ENCODE measurements at regions of chr17 and their contacts with region 1.

Region 1: GRCh38 chr17:64020056-64020766 is at the start of gene ICAM2:
- DNase-seq: peak; percentile 83 to 99 (median 90)
- ATAC-seq: peak; percentile 73
- H3K4me3 ChIP-seq: peak within 1 kb of the TSS; percentile 78 to 87
- H3K4me3 Mint-ChIP-seq: peak within 1 kb of the TSS; percentile 99
- H3K27ac ChIP-seq: peak within 1 kb of the TSS; percentile 95 to 99
- H3K27ac Mint-ChIP-seq: peak within 1 kb of the TSS; percentile 100
- H3K4me1 ChIP-seq: peaks cover 72% of the 10 kb centered on the region
- H3K4me1 Mint-ChIP-seq: peaks cover 79% of the 10 kb centered on the region
- H3K27me3 ChIP-seq: no peaks in the 10 kb centered on the region
- H3K27me3 Mint-ChIP-seq: no peaks in the 10 kb centered on the region
- CTCF ChIP-seq: no peak
- total RNA-seq, gene ICAM2: 38.0 to 38.7 TPM

Region 2: GRCh38 chr17:63171428-63172393 is 848.5 kb before region 1 on chr17:
- CTCF ChIA-PET with region 1: no interaction called
- POLR2A ChIA-PET with region 1: no interaction called
- intact Hi-C with region 1: no loop called
- DNase-seq: no peak
- ATAC-seq: no peak
- H3K4me3 ChIP-seq: no peak overlapping the region
- H3K4me3 Mint-ChIP-seq: no peak overlapping the region
- H3K27ac ChIP-seq: no peak overlapping the region
- H3K27ac Mint-ChIP-seq: no peak overlapping the region
- H3K4me1 ChIP-seq: no peaks in the 10 kb centered on the region
- H3K4me1 Mint-ChIP-seq: no peaks in the 10 kb centered on the region
- H3K27me3 ChIP-seq: no peaks in the 10 kb centered on the region
- H3K27me3 Mint-ChIP-seq: no peaks in the 10 kb centered on the region
- CTCF ChIP-seq: no peak

Region 3: DNA sequence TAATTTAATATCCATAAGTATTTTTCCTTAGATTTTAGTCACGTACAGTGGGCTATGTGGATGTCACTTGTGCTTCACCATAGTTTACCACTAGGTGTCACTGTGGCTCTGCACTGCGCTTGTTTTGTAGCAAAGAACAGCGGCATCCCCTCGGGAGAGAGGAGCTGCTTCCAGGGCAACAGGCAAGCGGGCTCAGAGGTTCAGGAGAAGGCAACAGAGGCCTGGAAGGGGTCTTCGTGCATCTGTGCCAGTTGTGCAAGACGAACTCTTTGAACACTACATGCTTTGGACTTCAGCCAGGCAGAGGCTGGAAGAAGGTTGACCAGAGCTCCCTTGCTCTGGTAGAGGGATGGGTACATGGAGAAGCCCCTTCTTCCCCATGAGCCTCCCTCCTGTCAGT is 594.7 kb before region 1 on chr17:
- CTCF ChIA-PET with region 1: no interaction called
- POLR2A ChIA-PET with region 1: no interaction called
- intact Hi-C with region 1: no loop called
- DNase-seq: peak; percentile 35 to 84 (median 73)
- ATAC-seq: peak; percentile 84
- H3K4me3 ChIP-seq: no peak overlapping the region
- H3K4me3 Mint-ChIP-seq: no peak overlapping the region
- H3K27ac ChIP-seq: no peak overlapping the region
- H3K27ac Mint-ChIP-seq: no peak overlapping the region
- H3K4me1 ChIP-seq: peaks cover 29% of the 10 kb centered on the region
- H3K4me1 Mint-ChIP-seq: peaks cover 43% of the 10 kb centered on the region
- H3K27me3 ChIP-seq: no peaks in the 10 kb centered on the region
- H3K27me3 Mint-ChIP-seq: no peaks in the 10 kb centered on the region
- CTCF ChIP-seq: peak; percentile 99

Region 4: DNA sequence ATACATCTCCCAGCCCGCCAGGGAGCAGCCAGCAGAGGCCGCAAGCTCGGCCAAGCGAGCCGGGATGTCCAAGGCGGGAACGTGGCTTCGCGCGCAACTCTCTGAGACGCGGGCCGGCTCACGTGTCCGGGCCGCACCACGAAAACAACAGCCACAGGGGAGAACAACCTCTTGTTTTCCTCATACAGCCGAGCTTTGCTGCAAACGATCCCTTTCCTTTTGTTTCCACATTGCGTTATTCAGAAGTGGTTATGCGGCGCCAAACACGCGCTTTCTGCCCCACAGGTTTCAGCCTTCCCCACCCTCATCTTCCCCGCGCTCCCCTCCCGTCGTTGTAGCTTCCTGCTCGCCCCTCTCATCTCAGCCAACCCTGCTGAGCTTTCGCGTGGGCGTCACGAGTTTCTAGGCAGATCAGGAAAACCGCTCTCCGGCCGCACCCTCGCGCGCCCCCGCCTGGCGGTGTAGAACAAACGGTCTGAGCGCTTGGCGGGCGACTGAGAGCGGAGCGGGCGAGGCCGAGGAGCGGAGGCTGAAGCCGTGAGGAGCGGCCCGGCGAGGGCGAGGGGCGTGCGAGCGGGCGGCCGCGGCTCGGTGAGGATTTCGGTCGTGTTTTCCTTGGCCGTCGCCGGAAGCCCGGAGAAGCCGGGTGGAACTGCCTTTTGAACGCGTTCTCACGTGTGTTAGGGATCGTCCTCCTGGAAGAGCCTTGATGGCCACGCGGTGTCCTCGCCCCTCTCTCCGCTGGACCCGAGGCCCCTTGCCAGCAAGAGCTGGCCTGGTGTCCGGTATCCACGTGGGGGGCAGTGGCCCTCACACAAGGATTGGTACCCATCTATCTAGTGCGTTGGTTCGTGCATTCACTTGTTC is 171.1 kb before region 1 on chr17:
- CTCF ChIA-PET with region 1: no interaction called
- POLR2A ChIA-PET with region 1: no interaction called
- intact Hi-C with region 1: loop called (anchors 5 to 10 kb)
- DNase-seq: peak; percentile 88 to 97 (median 95)
- ATAC-seq: peak; percentile 98
- H3K4me3 ChIP-seq: peak overlapping the region; percentile 34 to 55
- H3K4me3 Mint-ChIP-seq: peak overlapping the region; percentile 81
- H3K27ac ChIP-seq: peak overlapping the region; percentile 23 to 81
- H3K27ac Mint-ChIP-seq: peak overlapping the region; percentile 90
- H3K4me1 ChIP-seq: peaks cover 12% of the 10 kb centered on the region
- H3K4me1 Mint-ChIP-seq: peaks cover 17% of the 10 kb centered on the region
- H3K27me3 ChIP-seq: no peaks in the 10 kb centered on the region
- H3K27me3 Mint-ChIP-seq: no peaks in the 10 kb centered on the region
- CTCF ChIP-seq: peak; percentile 73

Region 5: GRCh38 chr17:63984651-63985386 is 35.4 kb before region 1 on chr17:
- CTCF ChIA-PET with region 1: interaction called, 293 read pairs
- POLR2A ChIA-PET with region 1: interaction called, 12 read pairs
- intact Hi-C with region 1: loop called (anchors 1 kb)
- DNase-seq: peak in 7 of 9 experiments; percentile 29 to 85 (median 65)
- ATAC-seq: peak; percentile 94
- H3K4me3 ChIP-seq: no peak overlapping the region
- H3K4me3 Mint-ChIP-seq: no peak overlapping the region
- H3K27ac ChIP-seq: peak overlapping the region in 1 of 2 experiments; percentile 52
- H3K27ac Mint-ChIP-seq: peak overlapping the region; percentile 33
- H3K4me1 ChIP-seq: peaks cover 7% of the 10 kb centered on the region
- H3K4me1 Mint-ChIP-seq: peaks cover 21% of the 10 kb centered on the region
- H3K27me3 ChIP-seq: no peaks in the 10 kb centered on the region
- H3K27me3 Mint-ChIP-seq: no peaks in the 10 kb centered on the region
- CTCF ChIP-seq: no peak

Region 6: DNA sequence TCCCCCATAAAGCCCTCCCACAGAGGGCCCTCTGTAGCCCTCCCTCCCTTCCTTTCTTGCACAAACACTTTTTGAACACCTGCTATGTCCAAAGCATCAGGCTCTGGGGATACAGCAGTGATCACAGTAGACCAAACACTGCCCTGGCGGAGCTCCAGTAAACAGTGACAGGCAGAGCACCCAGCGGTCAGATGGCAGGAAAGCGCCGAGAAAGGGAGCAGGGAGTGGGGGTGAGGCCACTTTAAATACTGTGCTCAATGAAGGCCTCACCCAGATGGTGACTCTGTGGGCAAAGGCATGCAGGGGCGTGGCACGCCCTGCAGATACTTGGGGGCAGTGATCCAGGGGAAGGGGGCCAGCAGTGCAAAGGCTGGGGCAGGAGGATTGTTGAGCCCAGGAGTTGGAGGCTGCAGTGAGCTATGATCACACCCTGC is 14.5 kb before region 1 on chr17:
- CTCF ChIA-PET with region 1: interaction called, 293 read pairs
- POLR2A ChIA-PET with region 1: interaction called, 20 read pairs
- intact Hi-C with region 1: no loop called
- DNase-seq: no peak
- ATAC-seq: no peak
- H3K4me3 ChIP-seq: no peak overlapping the region
- H3K4me3 Mint-ChIP-seq: no peak overlapping the region
- H3K27ac ChIP-seq: no peak overlapping the region
- H3K27ac Mint-ChIP-seq: peak overlapping the region; percentile 85
- H3K4me1 ChIP-seq: peaks cover 39% of the 10 kb centered on the region
- H3K4me1 Mint-ChIP-seq: peaks cover 45% of the 10 kb centered on the region
- H3K27me3 ChIP-seq: no peaks in the 10 kb centered on the region
- H3K27me3 Mint-ChIP-seq: no peaks in the 10 kb centered on the region
- CTCF ChIP-seq: no peak

Region 7: GRCh38 chr17:64399071-64399766 is 379.0 kb after region 1 on chr17:
- CTCF ChIA-PET with region 1: no interaction called
- POLR2A ChIA-PET with region 1: no interaction called
- intact Hi-C with region 1: loop called in 1 of 2 experiments (anchors 5 kb)
- DNase-seq: peak in 2 of 9 experiments; percentile 26 to 30
- ATAC-seq: no peak
- H3K4me3 ChIP-seq: no peak overlapping the region
- H3K4me3 Mint-ChIP-seq: peak overlapping the region; percentile 42
- H3K27ac ChIP-seq: peak overlapping the region in 1 of 2 experiments; percentile 40
- H3K27ac Mint-ChIP-seq: peak overlapping the region; percentile 64
- H3K4me1 ChIP-seq: peaks cover 57% of the 10 kb centered on the region
- H3K4me1 Mint-ChIP-seq: peaks cover 50% of the 10 kb centered on the region
- H3K27me3 ChIP-seq: no peaks in the 10 kb centered on the region
- H3K27me3 Mint-ChIP-seq: no peaks in the 10 kb centered on the region
- CTCF ChIP-seq: no peak

Region 8: GRCh38 chr17:64411999-64412771 is 392.0 kb after region 1 on chr17:
- CTCF ChIA-PET with region 1: no interaction called
- POLR2A ChIA-PET with region 1: no interaction called
- intact Hi-C with region 1: no loop called
- DNase-seq: peak in 1 of 9 experiments; percentile 40
- ATAC-seq: peak; percentile 17
- H3K4me3 ChIP-seq: peak overlapping the region in 1 of 2 experiments; percentile 6
- H3K4me3 Mint-ChIP-seq: peak overlapping the region; percentile 76
- H3K27ac ChIP-seq: no peak overlapping the region
- H3K27ac Mint-ChIP-seq: peak overlapping the region; percentile 82
- H3K4me1 ChIP-seq: peaks cover 9% of the 10 kb centered on the region
- H3K4me1 Mint-ChIP-seq: peaks cover 24% of the 10 kb centered on the region
- H3K27me3 ChIP-seq: no peaks in the 10 kb centered on the region
- H3K27me3 Mint-ChIP-seq: no peaks in the 10 kb centered on the region
- CTCF ChIP-seq: no peak

Measured in CD8-positive, alpha-beta T cell (primary cell).